ENCODE measurements at regions of chr5 and their contacts with region 1.

Region 1: DNA sequence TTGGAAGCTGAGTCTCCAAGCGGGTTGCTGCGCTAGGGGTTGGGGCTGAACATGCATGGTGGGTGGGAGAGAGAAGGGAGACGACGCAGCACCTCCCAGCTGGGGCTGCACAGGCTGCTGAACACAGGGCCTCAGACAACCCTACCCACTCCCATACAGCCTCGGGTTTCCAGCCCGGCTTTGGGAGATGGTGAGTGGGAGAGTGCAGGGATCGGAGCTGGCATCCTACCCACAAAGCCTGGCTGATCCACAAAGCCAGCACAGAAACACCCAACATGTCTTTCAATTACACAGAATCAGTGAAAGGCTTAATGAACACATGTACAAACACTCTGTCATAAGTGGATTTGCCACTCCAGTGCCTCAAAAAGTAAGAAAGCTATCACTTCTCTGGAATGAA is 64.8 kb downstream of the NSG2 start:
- DNase-seq: no peak
- ATAC-seq: no peak
- H3K4me3 ChIP-seq: no peak overlapping the region
- H3K27ac ChIP-seq: no peak overlapping the region
- H3K4me1 ChIP-seq: no peaks in the 10 kb centered on the region
- H3K27me3 ChIP-seq: peaks cover 2 to 43% of the 10 kb centered on the region in 2 experiments
- CTCF ChIP-seq: no peak
- EP300 ChIP-seq: no peak
- POLR2A ChIP-seq: no peak
- RAD21 ChIP-seq: no peak

Region 2: DNA sequence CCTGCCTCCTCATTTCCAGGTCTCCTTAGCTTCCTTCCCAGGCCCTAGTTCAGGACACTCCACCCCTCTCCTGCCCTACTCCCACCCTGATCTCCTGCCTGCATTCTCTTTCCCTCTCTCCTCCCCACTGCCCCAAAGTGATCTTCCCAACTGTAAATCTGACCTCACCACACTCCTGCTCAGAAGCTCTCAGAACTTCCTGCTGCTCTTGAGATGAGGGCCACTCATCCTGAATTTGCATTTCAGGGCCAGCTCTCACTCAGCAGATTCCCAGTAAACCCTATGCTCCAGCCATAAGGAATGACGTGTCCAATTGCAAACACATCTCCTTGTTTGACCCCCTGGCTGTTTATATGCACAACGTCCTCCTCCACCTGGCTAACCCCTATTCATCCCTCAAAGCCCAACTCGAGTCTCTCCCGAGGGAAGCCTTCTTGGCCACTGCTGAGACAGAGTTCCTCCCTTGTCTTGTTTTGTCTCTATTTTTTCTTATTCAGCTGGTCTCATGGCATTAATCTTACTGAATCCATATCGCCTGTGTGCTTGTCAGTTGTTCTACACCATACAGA is 30.2 kb after region 1 on chr5:
- CTCF ChIA-PET with region 1: no interaction called
- POLR2A ChIA-PET with region 1: no interaction called
- in situ Hi-C with region 1: no loop called
- intact Hi-C with region 1: loop called (anchors 1 kb)
- DNase-seq: no peak
- ATAC-seq: no peak
- H3K4me3 ChIP-seq: no peak overlapping the region
- H3K27ac ChIP-seq: no peak overlapping the region
- H3K4me1 ChIP-seq: no peaks in the 10 kb centered on the region
- H3K27me3 ChIP-seq: peaks cover 1 to 6% of the 10 kb centered on the region in 2 experiments; a peak in 3 of 5 replicates
- CTCF ChIP-seq: no peak
- EP300 ChIP-seq: no peak
- POLR2A ChIP-seq: no peak
- RAD21 ChIP-seq: no peak

Region 3: GRCh38 chr5:174148721-174149120 is 38.4 kb after region 1 on chr5:
- CTCF ChIA-PET with region 1: no interaction called
- POLR2A ChIA-PET with region 1: no interaction called
- in situ Hi-C with region 1: no loop called
- intact Hi-C with region 1: loop called (anchors 1 kb)
- DNase-seq: no peak
- ATAC-seq: no peak
- H3K4me3 ChIP-seq: no peak overlapping the region
- H3K27ac ChIP-seq: no peak overlapping the region
- H3K4me1 ChIP-seq: no peaks in the 10 kb centered on the region
- H3K27me3 ChIP-seq: no peaks in the 10 kb centered on the region; a peak in 2 of 5 replicates
- CTCF ChIP-seq: no peak
- EP300 ChIP-seq: no peak
- POLR2A ChIP-seq: no peak
- RAD21 ChIP-seq: no peak

Region 4: DNA sequence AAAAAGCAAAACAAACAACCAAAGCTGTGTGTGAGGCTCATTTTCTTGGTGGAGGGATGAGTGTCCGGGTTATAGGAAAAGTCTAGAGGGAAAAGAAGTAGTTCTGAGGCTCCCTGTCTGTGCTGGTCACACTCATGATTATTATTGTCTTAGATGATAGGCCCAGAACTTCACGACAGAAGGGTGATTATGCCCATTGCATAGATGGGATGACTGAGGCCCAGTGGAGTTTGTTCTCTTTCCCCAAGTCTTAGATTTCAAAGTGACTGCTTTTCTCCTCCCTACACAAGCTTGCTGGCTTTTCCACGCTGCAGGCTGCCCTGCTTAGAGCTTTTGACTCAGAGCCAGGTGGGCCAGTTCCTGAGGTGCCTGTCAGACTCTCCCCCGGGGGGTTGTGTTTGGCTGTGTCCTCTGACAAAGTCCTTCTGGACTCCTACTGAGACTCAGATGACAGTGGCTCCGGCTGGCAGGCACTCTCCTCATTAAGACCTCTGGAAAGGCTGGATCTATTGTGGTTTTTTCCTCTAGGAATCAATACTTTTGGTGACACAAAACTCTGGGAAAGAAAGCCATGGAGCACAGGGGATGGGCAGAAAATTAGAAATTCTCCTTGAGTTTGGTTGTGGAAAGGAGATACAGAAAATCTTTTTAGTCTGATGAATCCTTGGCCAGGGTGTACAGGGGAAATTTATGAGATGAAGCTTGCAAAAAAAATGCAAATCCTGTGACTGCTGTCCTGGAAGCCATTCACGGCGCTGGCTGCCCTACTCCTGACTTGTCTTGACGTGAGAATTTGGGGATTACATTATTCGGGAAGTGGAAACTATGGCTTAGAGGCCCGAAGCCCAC is 56.1 kb after region 1 on chr5:
- CTCF ChIA-PET with region 1: no interaction called
- POLR2A ChIA-PET with region 1: no interaction called
- in situ Hi-C with region 1: no loop called
- intact Hi-C with region 1: no loop called
- DNase-seq: no peak
- ATAC-seq: no peak
- H3K4me3 ChIP-seq: no peak overlapping the region
- H3K27ac ChIP-seq: no peak overlapping the region
- H3K4me1 ChIP-seq: no peaks in the 10 kb centered on the region
- H3K27me3 ChIP-seq: no peaks in the 10 kb centered on the region
- CTCF ChIP-seq: no peak
- EP300 ChIP-seq: no peak
- POLR2A ChIP-seq: no peak
- RAD21 ChIP-seq: no peak